ENCODE measurements at regions of chrX and their contacts with region 1.

Region 1: GRCh38 chrX:15694941-15695451 is 30.4 kb upstream of the CLTRN start:
- DNase-seq: peak; percentile 46
- ATAC-seq: peak; percentile 93

Region 2: GRCh38 chrX:15579778-15580747 is 114.9 kb before region 1 on chrX:
- intact Hi-C with region 1: no loop called
- DNase-seq: peak; percentile 59
- ATAC-seq: peak; percentile 97

Region 3: GRCh38 chrX:15653961-15654360 is 41.0 kb before region 1 on chrX:
- intact Hi-C with region 1: no loop called
- DNase-seq: no peak
- ATAC-seq: no peak

Region 4: DNA sequence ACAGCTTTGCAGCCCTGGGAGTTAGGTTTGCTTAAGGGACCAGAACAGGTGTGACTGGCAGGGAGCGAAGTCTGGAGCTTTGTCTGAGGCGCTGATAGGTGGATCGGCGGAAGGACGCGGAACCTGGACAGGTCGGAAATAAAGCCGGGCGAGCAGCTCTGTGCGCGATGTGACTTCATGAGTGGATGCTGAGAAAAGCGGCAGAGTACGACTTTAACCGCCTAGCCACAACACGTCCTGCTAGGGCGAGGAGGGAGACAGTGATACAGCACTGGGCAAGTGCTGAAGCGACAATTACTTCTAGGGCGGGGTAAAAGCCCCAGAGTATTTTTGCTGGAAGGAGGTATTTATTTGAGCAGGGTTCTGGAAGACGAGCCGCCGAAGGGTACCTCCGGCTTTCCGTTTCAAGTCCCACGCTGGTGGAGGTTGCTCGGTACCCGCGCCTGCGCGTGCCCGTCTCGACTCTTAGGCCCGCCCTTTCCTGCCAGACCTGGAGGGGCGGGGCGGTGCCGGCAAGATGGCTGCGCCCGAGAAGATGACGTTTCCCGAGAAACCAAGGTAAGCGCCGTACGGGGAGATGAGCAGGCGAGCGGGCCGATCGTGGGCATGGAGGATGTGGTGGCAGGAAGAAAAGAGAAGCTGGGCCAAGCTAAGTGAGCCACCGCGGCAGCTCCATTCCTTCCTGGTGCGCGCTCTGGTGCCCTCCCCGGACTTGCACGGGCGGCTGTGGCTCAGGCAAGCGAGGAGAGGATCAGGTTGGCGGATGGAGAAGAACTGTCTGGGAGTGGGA is 95.2 kb after region 1 on chrX and contains the start of gene ZRSR2:
- intact Hi-C with region 1: loop called (anchors 10 kb)
- DNase-seq: peak; percentile 90
- ATAC-seq: peak; percentile 98
- total RNA-seq, gene ZRSR2: 6.8 TPM